ENCODE measurements at regions of chr10 and their contacts with region 1.

Region 1: GRCh38 chr10:68156373-68157185 is 47.3 kb downstream of the MYPN start:
- DNase-seq: peak; percentile 29
- H3K4me3 Mint-ChIP-seq: no peak overlapping the region
- H3K27ac Mint-ChIP-seq: no peak overlapping the region
- H3K4me1 Mint-ChIP-seq: peaks cover 8% of the 10 kb centered on the region
- H3K27me3 Mint-ChIP-seq: no peaks in the 10 kb centered on the region

Region 2: GRCh38 chr10:68082872-68083271 is 73.7 kb before region 1 on chr10:
- intact Hi-C with region 1: loop called (anchors 1 kb)
- DNase-seq: no peak
- H3K4me3 Mint-ChIP-seq: no peak overlapping the region
- H3K27ac Mint-ChIP-seq: no peak overlapping the region
- H3K4me1 Mint-ChIP-seq: peaks cover 6% of the 10 kb centered on the region
- H3K27me3 Mint-ChIP-seq: peaks cover 7% of the 10 kb centered on the region

Region 3: GRCh38 chr10:68142761-68143160 is 13.8 kb before region 1 on chr10:
- intact Hi-C with region 1: no loop called
- DNase-seq: no peak
- H3K4me3 Mint-ChIP-seq: no peak overlapping the region
- H3K27ac Mint-ChIP-seq: no peak overlapping the region
- H3K4me1 Mint-ChIP-seq: peaks cover 13% of the 10 kb centered on the region
- H3K27me3 Mint-ChIP-seq: peaks cover 26% of the 10 kb centered on the region